Ovary (tissue), 10 donors: ENCODE measurements at regions of chr16 and their contacts with region 1.

Region 1: GRCh38 chr16:4957720-4958509 is at the start of gene SEC14L5:
- DNase-seq: peak; percentile 98 to 99 (median 99)
- H3K4me3 ChIP-seq: peak within 1 kb of the TSS; percentile 40
- H3K27ac ChIP-seq: peak within 1 kb of the TSS in 1 of 2 donors; percentile 24
- H3K4me1 ChIP-seq: peaks cover 4% of the 10 kb centered on the region
- H3K27me3 ChIP-seq: no peaks in the 10 kb centered on the region
- CTCF ChIP-seq: no peak
- EP300 ChIP-seq: no peak
- POLR2A ChIP-seq: no peak
- total RNA-seq, gene SEC14L5: 0.11 to 0.87 (median 0.38) TPM

Region 2: GRCh38 chr16:4616047-4616811 is 341.7 kb before region 1 on chr16:
- intact Hi-C with region 1: loop called in 1 of 4 experiments (anchors 10 kb)
- DNase-seq: peak; percentile 99 to 100 (median 99)
- H3K4me3 ChIP-seq: peak overlapping the region; percentile 55
- H3K27ac ChIP-seq: peak overlapping the region; percentile 69 to 95
- H3K4me1 ChIP-seq: peaks cover 18% of the 10 kb centered on the region
- H3K27me3 ChIP-seq: no peaks in the 10 kb centered on the region
- CTCF ChIP-seq: peak in 2 of 3 donors; percentile 12 to 52
- EP300 ChIP-seq: peak; percentile 89
- POLR2A ChIP-seq: peak; percentile 74